GM12878 (cell line): ENCODE measurements at regions of chr10 and their contacts with region 1.

Region 1: DNA sequence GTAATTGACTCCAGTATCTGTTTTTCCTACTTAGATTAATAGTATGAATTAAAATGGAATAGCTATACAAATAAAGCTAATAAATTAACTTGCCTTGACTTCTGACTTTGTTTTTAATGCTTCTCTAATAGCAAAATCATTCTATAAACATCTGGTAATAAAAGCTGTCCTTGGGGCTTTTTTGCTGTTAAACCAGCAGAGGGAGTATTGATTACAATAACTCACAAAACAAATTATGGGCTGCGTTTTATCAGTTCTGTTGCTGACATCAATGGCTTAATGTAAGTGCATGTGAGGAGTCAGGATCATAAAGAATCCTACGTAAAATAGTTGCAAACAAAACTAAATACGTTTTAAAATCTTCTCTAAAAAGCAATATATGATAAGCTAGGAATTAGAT is 667.8 kb downstream of the PCDH15 start:
- DNase-seq: no peak
- ATAC-seq: 0 out of 3 replicates have a peak, but pooled peaks have one; percentile 20
- H3K4me3 ChIP-seq: no peak overlapping the region
- H3K27ac ChIP-seq: no peak overlapping the region
- H3K4me1 ChIP-seq: no peaks in the 10 kb centered on the region
- H3K27me3 ChIP-seq: no peaks in the 10 kb centered on the region
- CTCF ChIP-seq: peak; percentile 9 to 36 (median 25); a peak in 3 of 6 replicates
- EP300 ChIP-seq: no peak
- POLR2A ChIP-seq: no peak
- RAD21 ChIP-seq: peak; percentile 53; the same call in 1 of the 2 replicates

Region 2: DNA sequence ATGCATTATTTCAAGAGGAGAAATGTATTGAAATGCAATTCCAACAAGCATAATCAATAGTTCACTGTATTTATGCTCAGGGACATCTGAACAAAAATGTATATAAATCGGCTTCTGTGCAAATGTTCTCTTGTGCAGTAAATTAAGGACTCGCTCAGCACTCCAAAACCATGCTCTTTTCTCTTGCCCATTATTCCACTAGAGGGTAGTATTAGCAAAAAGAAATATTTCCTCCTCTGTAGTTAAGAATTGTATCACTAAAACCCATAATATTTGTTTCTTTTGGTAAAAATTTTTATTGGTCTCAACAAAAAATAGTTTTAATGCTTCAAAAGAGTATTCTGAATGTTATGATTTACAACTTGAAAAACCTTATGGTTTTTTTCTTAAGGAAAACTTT is 135.2 kb before region 1 on chr10:
- CTCF ChIA-PET with region 1: interaction called, 19 read pairs
- POLR2A ChIA-PET with region 1: no interaction called
- RAD21 ChIA-PET with region 1: interaction called, 23 read pairs
- SMC1A ChIA-PET with region 1: interaction called, 38 read pairs
- in situ Hi-C with region 1: no loop called
- intact Hi-C with region 1: no loop called
- DNase-seq: no peak
- ATAC-seq: peak; percentile 59; the same call in 2 of the 3 replicates
- H3K4me3 ChIP-seq: no peak overlapping the region
- H3K27ac ChIP-seq: no peak overlapping the region
- H3K4me1 ChIP-seq: no peaks in the 10 kb centered on the region
- H3K27me3 ChIP-seq: no peaks in the 10 kb centered on the region
- CTCF ChIP-seq: no peak; a peak in 1 of 6 replicates
- EP300 ChIP-seq: no peak
- POLR2A ChIP-seq: no peak
- RAD21 ChIP-seq: peak; percentile 54; the same call in 1 of the 2 replicates

Region 3: DNA sequence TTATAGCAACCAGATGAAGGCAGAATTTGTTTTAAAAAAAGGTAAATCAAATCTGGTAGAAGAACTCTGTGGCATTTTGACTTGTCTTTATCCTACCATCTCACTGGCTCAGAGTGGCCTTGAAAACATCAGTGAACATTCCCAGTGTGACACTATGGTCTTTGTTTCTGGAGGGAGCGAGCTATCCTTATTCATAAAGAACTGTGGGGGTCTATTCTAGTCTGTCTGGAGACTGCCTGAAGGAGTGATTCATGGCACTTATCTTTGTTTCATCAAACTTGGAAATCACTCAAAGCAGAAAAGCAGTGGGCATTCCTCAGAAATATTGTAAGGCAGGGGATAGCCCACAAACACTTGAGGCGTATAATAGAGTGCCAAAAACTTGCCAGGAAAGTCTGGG is 51.3 kb before region 1 on chr10:
- CTCF ChIA-PET with region 1: interaction called, 6 read pairs
- POLR2A ChIA-PET with region 1: no interaction called
- RAD21 ChIA-PET with region 1: interaction called, 6 read pairs
- SMC1A ChIA-PET with region 1: interaction called, 10 read pairs
- in situ Hi-C with region 1: no loop called
- intact Hi-C with region 1: no loop called
- DNase-seq: no peak
- ATAC-seq: no peak
- H3K4me3 ChIP-seq: no peak overlapping the region
- H3K27ac ChIP-seq: no peak overlapping the region
- H3K4me1 ChIP-seq: no peaks in the 10 kb centered on the region
- H3K27me3 ChIP-seq: no peaks in the 10 kb centered on the region
- CTCF ChIP-seq: no peak
- EP300 ChIP-seq: no peak
- POLR2A ChIP-seq: no peak
- RAD21 ChIP-seq: no peak

Region 4: DNA sequence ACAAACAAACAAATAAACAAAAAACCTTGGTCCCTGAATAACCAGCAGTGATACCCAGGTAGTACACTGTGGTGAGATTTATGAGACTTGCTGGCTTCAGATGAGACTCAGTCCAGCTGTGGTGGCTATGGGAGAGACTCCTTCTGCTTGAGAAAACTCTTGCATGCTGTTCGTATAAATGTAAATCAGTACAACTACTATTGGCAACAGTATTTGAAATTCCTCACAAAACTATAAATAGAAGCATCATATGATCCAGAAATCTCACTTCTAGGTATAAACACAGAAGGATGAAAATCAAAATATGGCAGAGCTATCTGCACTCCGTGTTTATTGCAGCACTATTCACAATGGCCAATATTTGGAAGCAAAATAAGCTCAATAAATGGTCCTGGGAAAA is 24.2 kb before region 1 on chr10:
- CTCF ChIA-PET with region 1: interaction called, 36 read pairs
- POLR2A ChIA-PET with region 1: interaction called, 3 read pairs
- RAD21 ChIA-PET with region 1: interaction called, 29 read pairs
- SMC1A ChIA-PET with region 1: interaction called, 14 read pairs
- in situ Hi-C with region 1: no loop called
- intact Hi-C with region 1: no loop called
- DNase-seq: no peak
- ATAC-seq: no peak
- H3K4me3 ChIP-seq: no peak overlapping the region
- H3K27ac ChIP-seq: no peak overlapping the region
- H3K4me1 ChIP-seq: no peaks in the 10 kb centered on the region
- H3K27me3 ChIP-seq: no peaks in the 10 kb centered on the region
- CTCF ChIP-seq: no peak
- EP300 ChIP-seq: no peak
- POLR2A ChIP-seq: no peak
- RAD21 ChIP-seq: no peak

Region 5: GRCh38 chr10:54194806-54195205 is 61.6 kb after region 1 on chr10:
- CTCF ChIA-PET with region 1: interaction called, 9 read pairs
- POLR2A ChIA-PET with region 1: interaction called, 3 read pairs
- RAD21 ChIA-PET with region 1: interaction called, 18 read pairs
- SMC1A ChIA-PET with region 1: interaction called, 33 read pairs
- in situ Hi-C with region 1: no loop called
- intact Hi-C with region 1: loop called (anchors 10 kb)
- DNase-seq: peak; percentile 4
- ATAC-seq: peak; percentile 92
- H3K4me3 ChIP-seq: no peak overlapping the region
- H3K27ac ChIP-seq: no peak overlapping the region
- H3K4me1 ChIP-seq: no peaks in the 10 kb centered on the region
- H3K27me3 ChIP-seq: no peaks in the 10 kb centered on the region
- CTCF ChIP-seq: no peak
- EP300 ChIP-seq: peak in 1 of 2 experiments; percentile 59; a peak in 2 of 4 replicates
- POLR2A ChIP-seq: no peak
- RAD21 ChIP-seq: no peak

Region 6: DNA sequence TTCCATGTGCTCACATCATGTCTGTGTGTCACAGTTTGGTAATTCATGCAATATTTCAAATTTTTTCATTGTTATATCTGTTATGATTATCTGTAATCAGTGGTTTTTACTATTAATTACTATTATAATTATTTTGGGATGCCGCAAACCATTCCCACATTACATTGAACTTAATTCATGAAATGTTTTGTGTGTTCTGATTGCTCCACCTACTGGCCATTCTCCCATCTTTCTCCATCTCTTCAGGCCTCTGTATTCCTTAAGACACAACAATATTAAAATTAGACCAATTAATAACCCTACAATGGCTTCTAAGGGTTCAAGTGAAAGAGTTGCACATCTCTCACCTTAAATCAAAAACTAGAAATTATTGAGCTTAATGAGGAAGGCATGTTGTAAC is 269.4 kb after region 1 on chr10:
- CTCF ChIA-PET with region 1: interaction called, 42 read pairs
- POLR2A ChIA-PET with region 1: no interaction called
- RAD21 ChIA-PET with region 1: interaction called, 25 read pairs
- SMC1A ChIA-PET with region 1: interaction called, 11 read pairs
- in situ Hi-C with region 1: no loop called
- intact Hi-C with region 1: loop called (anchors 10 kb)
- DNase-seq: no peak
- ATAC-seq: no peak
- H3K4me3 ChIP-seq: no peak overlapping the region
- H3K27ac ChIP-seq: no peak overlapping the region
- H3K4me1 ChIP-seq: no peaks in the 10 kb centered on the region
- H3K27me3 ChIP-seq: no peaks in the 10 kb centered on the region
- CTCF ChIP-seq: peak; percentile 20 to 44 (median 44); a peak in 5 of 6 replicates
- EP300 ChIP-seq: no peak
- POLR2A ChIP-seq: no peak
- RAD21 ChIP-seq: peak; percentile 61